Prostate gland (tissue), 2 donors: ENCODE measurements at regions of chr16 and their contacts with region 1.

Region 1: GRCh38 chr16:16120382-16121184 is 102.7 kb downstream of the ABCC6 start:
- DNase-seq: no peak
- H3K4me3 ChIP-seq: no peak overlapping the region
- H3K27ac ChIP-seq: peak overlapping the region in 1 of 2 donors; percentile 26
- H3K4me1 ChIP-seq: no peaks in the 10 kb centered on the region
- H3K27me3 ChIP-seq: no peaks in the 10 kb centered on the region
- CTCF ChIP-seq: no peak
- POLR2A ChIP-seq: no peak

Region 2: DNA sequence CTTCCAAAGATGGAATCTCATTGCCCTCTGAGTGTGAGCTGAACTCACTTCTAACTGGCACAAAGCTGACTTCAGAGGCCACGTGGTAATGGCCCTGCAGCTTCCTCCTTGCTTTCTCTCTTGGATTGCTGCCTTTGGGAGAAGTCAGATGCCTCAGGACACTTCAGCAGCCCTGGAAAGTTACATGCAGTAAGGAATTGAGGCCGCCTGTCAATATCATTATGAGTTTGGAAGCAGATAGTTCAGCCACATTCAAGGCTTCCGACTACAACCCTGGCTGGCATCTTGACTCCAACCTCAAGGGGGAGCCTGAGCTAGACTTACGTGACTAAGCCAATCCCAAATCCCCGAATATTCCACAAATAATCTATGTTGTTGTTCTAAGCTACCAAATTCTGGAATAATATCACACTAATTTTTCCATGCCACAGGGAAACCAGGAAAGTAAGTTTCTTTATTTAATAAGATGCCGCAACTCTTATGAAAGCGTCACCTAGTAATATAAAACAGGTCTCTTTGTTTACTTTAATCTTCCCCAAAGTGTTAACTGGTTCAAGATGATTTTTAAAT is 245.8 kb before region 1 on chr16:
- intact Hi-C with region 1: loop called (anchors 5 kb)
- DNase-seq: peak; percentile 37
- H3K4me3 ChIP-seq: no peak overlapping the region
- H3K27ac ChIP-seq: peak overlapping the region in 1 of 2 donors; percentile 28
- H3K4me1 ChIP-seq: no peaks in the 10 kb centered on the region
- H3K27me3 ChIP-seq: no peaks in the 10 kb centered on the region
- CTCF ChIP-seq: peak; percentile 36 to 69 (median 54)
- POLR2A ChIP-seq: no peak

Region 3: DNA sequence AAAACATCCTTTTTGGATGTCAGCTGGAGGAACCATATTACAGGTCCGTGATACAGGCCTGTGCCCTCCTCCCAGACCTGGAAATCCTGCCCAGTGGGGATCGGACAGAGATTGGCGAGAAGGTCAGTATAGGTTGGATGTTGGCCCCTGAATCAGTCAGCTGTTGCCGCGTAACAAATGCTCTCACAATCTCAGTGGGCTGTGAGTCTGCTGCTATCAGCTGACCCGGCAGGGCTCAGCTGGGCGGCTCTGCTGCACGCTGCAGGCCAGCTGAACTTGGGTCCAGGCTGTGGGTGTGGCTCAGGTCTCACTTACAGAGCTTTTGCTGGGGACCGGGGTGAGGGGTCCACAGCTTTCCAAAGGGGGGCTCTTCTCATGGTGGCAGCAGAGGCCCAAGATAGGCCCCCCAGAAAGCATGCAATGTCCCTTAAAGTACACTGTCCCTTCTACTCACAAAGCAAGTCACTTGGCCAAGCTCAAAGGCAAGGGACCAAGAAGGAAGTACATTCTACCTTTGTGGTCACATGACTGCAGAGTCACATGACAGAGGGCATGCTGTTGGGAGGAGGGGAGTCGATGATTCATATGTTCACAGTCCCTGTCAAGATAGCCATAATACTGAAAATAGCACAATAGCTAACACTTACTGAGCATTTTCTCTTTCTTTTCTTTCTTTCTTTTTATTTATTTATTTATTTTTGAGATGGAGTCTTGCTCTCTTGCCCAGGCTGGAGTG is 37.0 kb before region 1 on chr16:
- intact Hi-C with region 1: no loop called
- DNase-seq: no peak
- H3K4me3 ChIP-seq: no peak overlapping the region
- H3K27ac ChIP-seq: no peak overlapping the region
- H3K4me1 ChIP-seq: no peaks in the 10 kb centered on the region
- H3K27me3 ChIP-seq: no peaks in the 10 kb centered on the region
- CTCF ChIP-seq: no peak
- POLR2A ChIP-seq: no peak